GM13977 (cell line): ENCODE measurements at regions of chr20 and their contacts with region 1.

Region 1: GRCh38 chr20:22567944-22568871 is 16.2 kb downstream of the FOXA2 start:
- DNase-seq: no peak
- CTCF ChIP-seq: no peak

Region 2: GRCh38 chr20:22453239-22454080 is 114.7 kb before region 1 on chr20:
- in situ Hi-C with region 1: loop called (anchors 25 kb)
- DNase-seq: no peak
- CTCF ChIP-seq: no peak

Region 3: GRCh38 chr20:22703842-22704241 is 135.6 kb after region 1 on chr20:
- in situ Hi-C with region 1: no loop called
- DNase-seq: no peak
- CTCF ChIP-seq: no peak